Cardiac septum (tissue), 1 donor: ENCODE measurements at regions of chr5 and their contacts with region 1.

Region 1: DNA sequence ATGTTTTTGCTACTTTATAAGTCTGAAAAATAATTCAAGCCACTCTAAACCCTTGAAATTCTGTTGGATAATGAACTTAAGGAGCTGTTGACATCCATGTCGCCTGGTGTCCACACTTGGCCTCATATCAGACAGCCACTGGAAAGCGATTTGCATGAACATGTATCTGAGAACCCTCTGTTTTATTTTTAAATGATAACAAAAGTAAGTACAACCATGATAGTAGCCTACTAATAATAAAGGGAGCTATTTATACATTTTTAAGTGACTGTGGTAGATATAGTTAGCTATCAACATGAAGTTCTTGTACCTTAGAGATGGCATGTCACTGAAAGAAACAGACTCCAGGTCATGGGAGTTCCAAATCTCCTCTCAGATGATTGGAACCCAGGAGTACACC is 53.3 kb downstream of the PLCXD3 start:
- DNase-seq: no peak

Region 2: GRCh38 chr5:41510176-41510831 is 53.2 kb after region 1 on chr5 and contains the start of gene PLCXD3:
- intact Hi-C with region 1: loop called (anchors 5 kb)
- DNase-seq: peak; percentile 76
- total RNA-seq, gene PLCXD3: 63.8 TPM

Region 3: GRCh38 chr5:41524174-41524573 is 67.1 kb after region 1 on chr5:
- intact Hi-C with region 1: loop called (anchors 2 kb)
- DNase-seq: no peak